CD8-positive, alpha-beta T cell (primary cell): ENCODE measurements at regions of chr17 and their contacts with region 1.

Region 1: DNA sequence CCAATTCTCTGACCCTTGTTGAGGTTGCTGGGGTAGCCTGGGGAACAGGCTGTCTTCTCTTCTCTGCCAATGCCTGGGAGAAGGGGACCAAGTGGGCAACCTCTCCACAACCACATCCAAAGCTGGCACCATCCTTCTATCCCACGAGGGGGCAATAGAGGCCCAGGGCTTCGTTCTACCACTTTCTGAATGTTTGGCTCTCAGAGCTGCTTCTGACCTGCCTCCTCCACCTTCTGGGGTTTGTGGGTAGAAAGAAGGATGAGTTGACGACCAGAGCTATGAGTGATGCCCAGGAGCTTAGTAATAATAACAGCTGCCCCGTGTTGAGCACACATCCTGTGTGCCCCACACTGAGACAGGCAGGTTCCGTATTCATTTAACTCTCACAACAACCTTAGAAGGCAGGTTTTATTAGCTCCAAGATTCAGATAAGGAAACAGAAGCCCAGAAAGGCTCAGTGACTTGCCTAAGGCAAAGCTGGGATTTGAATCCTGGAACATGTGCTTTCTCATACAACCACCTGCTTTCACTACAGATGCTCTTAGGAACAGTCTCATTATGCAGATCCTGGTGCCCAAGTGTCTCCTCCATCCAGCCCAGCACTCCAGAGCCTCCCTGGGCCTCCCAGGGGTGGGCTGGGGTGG is 11.1 kb downstream of the TSPOAP1 start:
- DNase-seq: peak; percentile 57 to 92 (median 76)
- ATAC-seq: peak; percentile 97
- H3K4me3 ChIP-seq: no peak overlapping the region
- H3K4me3 Mint-ChIP-seq: peak overlapping the region; percentile 21
- H3K27ac ChIP-seq: peak overlapping the region; percentile 36 to 64
- H3K27ac Mint-ChIP-seq: peak overlapping the region; percentile 91
- H3K4me1 ChIP-seq: peaks cover 11% of the 10 kb centered on the region
- H3K4me1 Mint-ChIP-seq: peaks cover 13% of the 10 kb centered on the region
- H3K27me3 ChIP-seq: no peaks in the 10 kb centered on the region
- H3K27me3 Mint-ChIP-seq: no peaks in the 10 kb centered on the region
- CTCF ChIP-seq: peak; percentile 78

Region 2: DNA sequence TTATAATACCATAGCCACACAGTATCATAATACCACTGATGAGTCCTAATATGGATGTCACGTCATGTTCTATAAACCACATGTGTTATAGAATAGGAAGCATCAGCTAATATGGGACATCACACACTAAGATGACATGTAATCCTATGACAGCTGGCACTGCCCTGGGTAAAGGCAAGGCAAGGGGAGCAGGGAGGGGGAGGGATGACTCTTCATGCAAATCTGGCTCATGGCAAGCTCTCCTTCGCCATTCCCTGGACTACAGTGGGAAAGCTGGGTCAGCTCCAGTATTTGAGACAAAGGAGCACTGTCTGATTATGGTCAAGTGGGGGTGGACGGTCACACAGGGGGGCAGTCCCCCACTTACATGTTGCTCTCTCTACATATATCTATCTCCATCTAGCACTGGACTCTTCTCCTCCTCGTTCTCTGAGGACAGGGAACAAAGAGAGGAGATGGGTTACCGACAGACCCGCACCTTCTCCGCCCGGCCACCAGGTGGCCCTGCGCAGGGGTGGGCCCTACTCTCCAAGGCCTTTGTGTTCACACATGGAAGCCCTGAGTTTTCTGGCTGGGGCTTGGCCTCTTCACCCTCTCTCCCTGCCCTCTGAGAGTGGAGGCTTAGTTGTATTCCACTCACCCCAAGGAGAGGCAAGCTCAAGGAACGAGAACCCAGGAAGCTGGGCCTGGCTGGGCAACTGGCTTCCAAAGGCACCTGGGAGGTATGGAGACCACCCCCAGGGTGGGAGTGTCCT is 13.4 kb before region 1 on chr17:
- CTCF ChIA-PET with region 1: interaction called, 14 read pairs
- POLR2A ChIA-PET with region 1: no interaction called
- intact Hi-C with region 1: no loop called
- DNase-seq: peak; percentile 35 to 73 (median 57)
- ATAC-seq: peak; percentile 97
- H3K4me3 ChIP-seq: no peak overlapping the region
- H3K4me3 Mint-ChIP-seq: no peak overlapping the region
- H3K27ac ChIP-seq: no peak overlapping the region
- H3K27ac Mint-ChIP-seq: no peak overlapping the region
- H3K4me1 ChIP-seq: peaks cover 6% of the 10 kb centered on the region
- H3K4me1 Mint-ChIP-seq: peaks cover 6% of the 10 kb centered on the region
- H3K27me3 ChIP-seq: no peaks in the 10 kb centered on the region
- H3K27me3 Mint-ChIP-seq: no peaks in the 10 kb centered on the region
- CTCF ChIP-seq: peak; percentile 74

Region 3: DNA sequence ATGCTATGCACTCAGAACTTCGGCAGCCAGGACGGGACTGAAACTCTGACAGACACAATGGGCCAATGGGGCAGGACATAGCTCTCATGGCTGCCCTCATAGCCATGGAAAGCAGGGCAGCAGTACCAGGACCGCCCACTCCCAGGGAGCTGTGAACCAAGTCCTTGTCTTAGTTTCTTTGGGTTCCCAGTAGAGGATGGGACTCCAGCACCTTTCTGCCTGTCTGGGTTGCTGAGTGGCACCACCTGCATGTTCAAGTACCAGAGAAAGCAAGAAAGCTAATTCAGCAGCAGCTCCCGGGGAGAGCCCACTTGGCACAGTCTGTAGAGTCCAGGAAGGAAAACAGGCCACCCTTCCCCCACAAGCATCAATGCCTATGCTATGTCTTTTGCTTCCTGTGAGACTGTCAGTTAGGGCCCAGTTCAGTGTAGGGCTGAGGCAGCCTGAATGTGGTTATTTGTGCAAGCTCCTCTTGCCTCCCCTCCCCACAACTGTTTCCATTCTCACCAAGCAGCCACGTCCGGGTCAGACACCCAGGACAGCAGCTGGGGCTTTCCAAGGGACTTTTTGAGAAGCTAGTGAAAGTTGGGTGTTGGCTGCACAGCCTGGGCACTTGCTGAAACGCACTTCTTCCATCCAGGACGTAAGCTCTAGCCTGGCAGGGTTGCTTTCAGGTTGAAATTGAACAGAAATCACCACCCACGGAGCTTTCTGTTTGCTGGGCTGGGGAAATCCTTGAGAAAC is 26.7 kb after region 1 on chr17:
- CTCF ChIA-PET with region 1: interaction called, 587 read pairs
- POLR2A ChIA-PET with region 1: interaction called, 773 read pairs
- intact Hi-C with region 1: loop called (anchors 1 kb)
- DNase-seq: peak; percentile 61 to 98 (median 85)
- ATAC-seq: peak; percentile 72
- H3K4me3 ChIP-seq: peak overlapping the region; percentile 53 to 66
- H3K4me3 Mint-ChIP-seq: peak overlapping the region; percentile 81
- H3K27ac ChIP-seq: peak overlapping the region; percentile 79 to 99
- H3K27ac Mint-ChIP-seq: peak overlapping the region; percentile 95
- H3K4me1 ChIP-seq: peaks cover 91% of the 10 kb centered on the region
- H3K4me1 Mint-ChIP-seq: peaks cover 86% of the 10 kb centered on the region
- H3K27me3 ChIP-seq: no peaks in the 10 kb centered on the region
- H3K27me3 Mint-ChIP-seq: no peaks in the 10 kb centered on the region
- CTCF ChIP-seq: no peak

Region 4: GRCh38 chr17:58377093-58377601 is 59.6 kb after region 1 on chr17:
- CTCF ChIA-PET with region 1: interaction called, 14 read pairs
- POLR2A ChIA-PET with region 1: interaction called, 4 read pairs
- intact Hi-C with region 1: no loop called
- DNase-seq: no peak
- ATAC-seq: no peak
- H3K4me3 ChIP-seq: no peak overlapping the region
- H3K4me3 Mint-ChIP-seq: no peak overlapping the region
- H3K27ac ChIP-seq: no peak overlapping the region
- H3K27ac Mint-ChIP-seq: no peak overlapping the region
- H3K4me1 ChIP-seq: peaks cover 27% of the 10 kb centered on the region
- H3K4me1 Mint-ChIP-seq: peaks cover 31% of the 10 kb centered on the region
- H3K27me3 ChIP-seq: no peaks in the 10 kb centered on the region
- H3K27me3 Mint-ChIP-seq: no peaks in the 10 kb centered on the region
- CTCF ChIP-seq: no peak

Region 5: DNA sequence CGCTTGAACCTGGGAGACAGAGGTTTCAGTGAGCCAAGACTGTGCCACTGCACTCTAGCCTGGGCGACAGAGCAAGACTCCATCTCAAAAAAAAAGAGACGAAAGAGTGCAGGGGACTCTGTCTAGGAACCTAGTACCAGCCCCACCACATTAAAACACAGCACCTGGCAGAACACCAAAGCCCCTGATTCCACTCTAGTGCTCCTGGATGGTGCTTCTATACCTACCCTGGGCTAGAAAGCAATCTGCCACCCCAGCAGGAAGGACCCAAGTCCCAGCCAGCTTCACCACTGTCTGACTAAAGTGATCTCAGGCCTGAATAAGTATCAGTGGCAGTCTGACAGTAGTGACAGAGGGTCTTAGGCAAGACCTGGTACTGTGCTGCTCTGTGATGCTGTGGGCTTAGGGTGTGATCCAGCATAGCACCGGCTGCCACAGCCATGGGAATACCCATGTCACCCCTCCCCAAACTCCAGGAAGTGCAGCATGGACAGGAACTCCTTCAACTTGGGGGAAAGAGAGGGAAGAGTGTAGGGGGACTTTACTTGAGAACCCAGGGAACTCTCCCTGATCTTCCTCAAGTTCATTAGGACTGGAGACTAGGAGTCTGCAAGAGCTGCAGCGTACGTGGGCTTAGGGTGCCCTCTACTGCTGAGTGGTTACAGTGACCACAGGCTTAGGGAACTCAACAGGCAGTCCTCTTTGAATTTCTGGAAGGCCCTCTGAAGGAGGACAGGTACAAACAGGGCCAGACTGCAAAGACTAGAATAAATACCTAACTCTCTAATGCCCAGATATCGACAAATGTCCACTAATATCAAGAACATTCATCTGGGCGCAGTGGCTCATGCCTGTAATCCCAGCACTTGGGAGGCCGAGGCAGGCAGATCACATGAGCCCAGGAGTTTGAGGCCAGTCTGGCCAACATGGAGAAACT is 129.8 kb after region 1 on chr17:
- CTCF ChIA-PET with region 1: interaction called, 24 read pairs
- POLR2A ChIA-PET with region 1: interaction called, 7 read pairs
- intact Hi-C with region 1: loop called (anchors 1 kb)
- DNase-seq: peak; percentile 20 to 79 (median 58)
- ATAC-seq: no peak
- H3K4me3 ChIP-seq: no peak overlapping the region
- H3K4me3 Mint-ChIP-seq: no peak overlapping the region
- H3K27ac ChIP-seq: no peak overlapping the region
- H3K27ac Mint-ChIP-seq: no peak overlapping the region
- H3K4me1 ChIP-seq: no peaks in the 10 kb centered on the region
- H3K4me1 Mint-ChIP-seq: peaks cover 3% of the 10 kb centered on the region
- H3K27me3 ChIP-seq: no peaks in the 10 kb centered on the region
- H3K27me3 Mint-ChIP-seq: no peaks in the 10 kb centered on the region
- CTCF ChIP-seq: peak; percentile 60